ENCODE measurements at regions of chr11 and their contacts with region 1.

Region 1: DNA sequence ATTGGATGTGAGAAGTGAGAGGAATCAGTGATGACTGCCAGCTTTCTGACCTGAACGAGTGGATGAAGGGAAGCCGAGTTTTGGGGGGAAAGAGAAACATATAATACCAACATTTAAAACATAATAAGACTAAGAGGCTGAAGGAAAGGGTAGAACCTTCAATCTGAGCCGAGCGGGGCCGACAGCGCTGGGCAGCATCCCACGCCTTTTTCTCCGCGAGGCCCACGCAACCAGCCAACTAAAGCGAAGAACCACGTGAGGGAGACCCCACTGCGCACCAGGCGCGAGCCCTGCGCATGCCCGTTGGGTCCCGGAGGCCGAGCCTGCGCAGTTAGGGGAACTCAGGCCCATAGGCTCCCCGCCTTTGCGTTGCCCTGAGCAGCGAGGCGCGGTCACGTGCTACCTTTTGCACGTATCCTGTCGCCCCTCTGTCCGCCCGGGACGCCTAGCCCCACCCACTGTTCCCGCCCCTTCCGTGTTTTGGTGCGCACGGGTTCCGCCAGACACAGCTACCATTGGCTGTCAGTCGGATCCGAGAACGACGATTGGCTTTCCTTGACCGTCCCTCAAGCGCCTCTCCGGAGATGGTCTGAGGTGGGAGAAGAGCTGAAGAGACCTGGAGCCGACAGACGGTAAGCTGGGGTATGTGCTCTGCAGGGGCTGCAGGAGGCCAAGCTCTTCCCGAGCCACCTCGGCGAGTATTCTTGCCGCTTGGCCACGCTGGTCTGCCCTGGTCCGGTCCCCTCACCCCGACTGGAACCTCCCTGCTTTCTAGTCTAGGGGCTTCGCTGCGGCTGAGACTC is at the start of gene HINFP:
- DNase-seq: peak; percentile 97 to 100 (median 100)
- ATAC-seq: peak; percentile 97 to 99 (median 98)
- H3K4me3 ChIP-seq: peak within 1 kb of the TSS; percentile 77 to 91
- H3K4me3 Mint-ChIP-seq: peak within 1 kb of the TSS; percentile 89 to 94 (median 91)
- H3K27ac ChIP-seq: peak within 1 kb of the TSS; percentile 85
- H3K27ac Mint-ChIP-seq: peak within 1 kb of the TSS; percentile 94 to 95
- H3K4me1 ChIP-seq: peaks cover 13 to 30% of the 10 kb centered on the region in 2 experiments
- H3K4me1 Mint-ChIP-seq: peaks cover 38 to 54% (median 50%) of the 10 kb centered on the region in 3 donors
- H3K27me3 ChIP-seq: no peaks in the 10 kb centered on the region
- H3K27me3 Mint-ChIP-seq: no peaks in the 10 kb centered on the region
- total RNA-seq, gene HINFP: 30.0 to 68.5 (median 56.7) TPM

Region 2: GRCh38 chr11:118533662-118534363 is 587.4 kb before region 1 on chr11:
- CTCF ChIA-PET with region 1: no interaction called
- POLR2A ChIA-PET with region 1: no interaction called
- DNase-seq: no peak
- ATAC-seq: no peak
- H3K4me3 ChIP-seq: no peak overlapping the region
- H3K4me3 Mint-ChIP-seq: no peak overlapping the region
- H3K27ac ChIP-seq: no peak overlapping the region
- H3K27ac Mint-ChIP-seq: no peak overlapping the region
- H3K4me1 ChIP-seq: peaks cover 6 to 23% of the 10 kb centered on the region in 2 experiments
- H3K4me1 Mint-ChIP-seq: peaks cover 24 to 26% (median 26%) of the 10 kb centered on the region in 3 donors
- H3K27me3 ChIP-seq: no peaks in the 10 kb centered on the region
- H3K27me3 Mint-ChIP-seq: no peaks in the 10 kb centered on the region

Region 3: GRCh38 chr11:119095066-119095880 is 25.9 kb before region 1 on chr11:
- CTCF ChIA-PET with region 1: interaction called in 1 of 2 experiments, 7 read pairs
- POLR2A ChIA-PET with region 1: interaction called, 3 to 13 read pairs
- DNase-seq: peak; percentile 97 to 100 (median 99)
- ATAC-seq: peak; percentile 85 to 90 (median 88)
- H3K4me3 ChIP-seq: peak overlapping the region; percentile 73 to 95
- H3K4me3 Mint-ChIP-seq: peak overlapping the region; percentile 88 to 98 (median 92)
- H3K27ac ChIP-seq: peak overlapping the region; percentile 46
- H3K27ac Mint-ChIP-seq: peak overlapping the region; percentile 90 to 93
- H3K4me1 ChIP-seq: peaks cover 9 to 32% of the 10 kb centered on the region in 2 experiments
- H3K4me1 Mint-ChIP-seq: peaks cover 38 to 39% (median 38%) of the 10 kb centered on the region in 3 donors
- H3K27me3 ChIP-seq: no peaks in the 10 kb centered on the region
- H3K27me3 Mint-ChIP-seq: no peaks in the 10 kb centered on the region

Region 4: GRCh38 chr11:119101759-119102423 is 19.3 kb before region 1 on chr11 and contains the start of gene DPAGT1:
- CTCF ChIA-PET with region 1: interaction called in 1 of 2 experiments, 24 read pairs
- POLR2A ChIA-PET with region 1: interaction called, 4 to 21 read pairs
- DNase-seq: peak; percentile 70 to 89 (median 80)
- ATAC-seq: peak; percentile 85 to 90 (median 86)
- H3K4me3 ChIP-seq: peak within 1 kb of the TSS; percentile 83 to 98
- H3K4me3 Mint-ChIP-seq: peak within 1 kb of the TSS; percentile 86 to 98 (median 97)
- H3K27ac ChIP-seq: peak within 1 kb of the TSS; percentile 87
- H3K27ac Mint-ChIP-seq: peak within 1 kb of the TSS; percentile 99 to 100
- H3K4me1 ChIP-seq: peaks cover 16 to 35% of the 10 kb centered on the region in 2 experiments
- H3K4me1 Mint-ChIP-seq: peaks cover 39 to 57% (median 53%) of the 10 kb centered on the region in 3 donors
- H3K27me3 ChIP-seq: no peaks in the 10 kb centered on the region
- H3K27me3 Mint-ChIP-seq: no peaks in the 10 kb centered on the region
- total RNA-seq, gene DPAGT1: 21.7 to 54.2 (median 43.9) TPM

Region 5: DNA sequence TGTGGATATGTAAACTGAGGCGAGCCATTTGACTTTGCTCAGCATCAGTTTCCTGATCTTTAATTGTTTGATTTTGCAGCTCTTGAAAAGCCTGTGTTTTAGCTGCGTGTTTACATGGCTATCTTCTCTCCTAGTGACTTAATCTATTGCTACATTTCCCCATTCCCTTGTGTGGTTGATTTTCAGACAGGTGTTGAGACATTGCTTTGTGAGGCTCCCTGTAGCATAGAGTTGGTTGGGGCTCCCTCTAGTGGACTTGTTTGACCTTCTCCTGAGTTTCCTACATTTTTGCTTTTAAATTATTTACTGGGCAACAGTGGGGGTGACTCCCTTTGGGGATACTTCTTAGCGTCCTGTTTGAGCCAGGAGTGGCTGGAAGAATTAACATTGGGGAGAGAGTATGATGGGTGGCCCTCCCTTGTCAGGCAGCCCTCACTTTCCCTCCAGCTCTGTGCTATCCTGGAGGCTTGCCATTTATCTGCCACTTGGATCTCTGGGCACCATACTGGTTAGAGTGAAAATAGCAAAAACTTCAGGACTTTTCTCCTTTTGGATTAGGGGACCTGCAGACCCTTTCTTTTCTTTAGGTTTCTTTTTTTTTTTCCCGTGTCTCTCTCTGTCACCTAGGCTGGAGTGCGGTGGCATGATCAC is 75.7 kb after region 1 on chr11:
- CTCF ChIA-PET with region 1: no interaction called
- POLR2A ChIA-PET with region 1: no interaction called
- DNase-seq: peak; percentile 12 to 90 (median 60)
- ATAC-seq: peak; percentile 92 to 97 (median 94)
- H3K4me3 ChIP-seq: no peak overlapping the region
- H3K4me3 Mint-ChIP-seq: no peak overlapping the region
- H3K27ac ChIP-seq: no peak overlapping the region
- H3K27ac Mint-ChIP-seq: no peak overlapping the region
- H3K4me1 ChIP-seq: peaks cover 0 to 2% of the 10 kb centered on the region in 2 experiments
- H3K4me1 Mint-ChIP-seq: peaks cover 0 to 7% (median 3%) of the 10 kb centered on the region in 3 donors
- H3K27me3 ChIP-seq: peaks cover 0 to 5% of the 10 kb centered on the region in 2 experiments
- H3K27me3 Mint-ChIP-seq: peaks cover 0 to 1% of the 10 kb centered on the region in 2 donors

Region 6: DNA sequence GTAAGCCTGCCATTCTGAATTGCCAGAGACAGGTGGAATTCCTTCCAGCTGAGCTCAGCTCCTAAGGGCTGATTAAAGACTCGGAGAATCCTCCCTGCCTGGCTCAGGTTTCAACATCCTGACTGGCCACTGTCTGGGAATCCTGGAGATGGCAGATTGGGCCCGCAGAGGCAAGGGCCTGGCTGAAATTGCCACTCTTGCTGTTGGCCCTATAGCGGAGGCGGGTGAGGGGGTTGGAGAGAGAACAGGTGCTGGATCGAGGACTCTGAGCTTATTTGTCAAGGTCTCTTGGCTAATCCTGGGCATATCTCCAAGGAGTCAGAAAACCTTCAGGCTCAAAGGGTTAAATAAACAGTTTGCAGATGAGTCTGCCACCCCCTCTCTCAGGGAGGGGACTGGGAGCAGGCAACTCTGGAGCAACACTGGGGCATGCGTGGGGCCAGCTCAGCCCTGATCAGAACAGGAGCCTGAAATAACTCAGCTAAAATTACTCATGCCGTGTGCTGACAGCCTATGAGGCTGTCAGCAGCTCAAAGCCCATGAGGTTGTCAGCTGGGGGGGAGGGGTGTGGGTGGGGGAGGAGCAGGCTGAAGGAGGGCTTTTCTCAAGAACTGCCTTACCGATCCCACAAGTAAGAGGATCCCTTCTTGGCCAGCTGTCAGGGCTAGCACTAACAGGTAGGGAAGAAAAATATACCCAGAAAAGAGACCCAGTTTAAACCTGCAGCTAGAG is 240.0 kb after region 1 on chr11:
- CTCF ChIA-PET with region 1: no interaction called
- POLR2A ChIA-PET with region 1: no interaction called
- DNase-seq: no peak
- ATAC-seq: no peak
- H3K4me3 ChIP-seq: no peak overlapping the region
- H3K4me3 Mint-ChIP-seq: no peak overlapping the region
- H3K27ac ChIP-seq: no peak overlapping the region
- H3K27ac Mint-ChIP-seq: no peak overlapping the region
- H3K4me1 ChIP-seq: peaks cover 0 to 21% of the 10 kb centered on the region in 2 experiments
- H3K4me1 Mint-ChIP-seq: peaks cover 9 to 19% (median 15%) of the 10 kb centered on the region in 3 donors
- H3K27me3 ChIP-seq: peaks cover 12 to 43% of the 10 kb centered on the region in 2 experiments
- H3K27me3 Mint-ChIP-seq: peaks cover 15 to 33% of the 10 kb centered on the region in 2 donors

Region 7: GRCh38 chr11:120354068-120354467 is 1232.9 kb after region 1 on chr11:
- CTCF ChIA-PET with region 1: no interaction called
- POLR2A ChIA-PET with region 1: no interaction called
- DNase-seq: no peak
- ATAC-seq: no peak
- H3K4me3 ChIP-seq: no peak overlapping the region
- H3K4me3 Mint-ChIP-seq: no peak overlapping the region
- H3K27ac ChIP-seq: no peak overlapping the region
- H3K27ac Mint-ChIP-seq: no peak overlapping the region
- H3K4me1 ChIP-seq: no peaks in the 10 kb centered on the region
- H3K4me1 Mint-ChIP-seq: peaks cover 0 to 4% (median 0%) of the 10 kb centered on the region in 3 donors
- H3K27me3 ChIP-seq: peaks cover 8 to 35% of the 10 kb centered on the region in 2 experiments
- H3K27me3 Mint-ChIP-seq: peaks cover 41 to 63% of the 10 kb centered on the region in 2 donors

Measured in T-cell (primary cell).